ENCODE measurements at regions of chr10 and their contacts with region 1.

Region 1: GRCh38 chr10:127813290-127813689 is 76.3 kb downstream of the FOXI2 start:
- DNase-seq: no peak
- H3K4me3 ChIP-seq: no peak overlapping the region
- H3K27ac ChIP-seq: no peak overlapping the region
- H3K4me1 ChIP-seq: no peaks in the 10 kb centered on the region
- H3K27me3 ChIP-seq: no peaks in the 10 kb centered on the region
- CTCF ChIP-seq: peak in 1 of 5 experiments; percentile 21
- EP300 ChIP-seq: no peak
- POLR2A ChIP-seq: no peak

Region 2: GRCh38 chr10:127720142-127720541 is 93.1 kb before region 1 on chr10:
- in situ Hi-C with region 1: no loop called
- intact Hi-C with region 1: no loop called
- DNase-seq: no peak
- H3K4me3 ChIP-seq: no peak overlapping the region
- H3K27ac ChIP-seq: no peak overlapping the region
- H3K4me1 ChIP-seq: no peaks in the 10 kb centered on the region
- H3K27me3 ChIP-seq: no peaks in the 10 kb centered on the region
- CTCF ChIP-seq: no peak
- EP300 ChIP-seq: no peak
- POLR2A ChIP-seq: no peak

Region 3: DNA sequence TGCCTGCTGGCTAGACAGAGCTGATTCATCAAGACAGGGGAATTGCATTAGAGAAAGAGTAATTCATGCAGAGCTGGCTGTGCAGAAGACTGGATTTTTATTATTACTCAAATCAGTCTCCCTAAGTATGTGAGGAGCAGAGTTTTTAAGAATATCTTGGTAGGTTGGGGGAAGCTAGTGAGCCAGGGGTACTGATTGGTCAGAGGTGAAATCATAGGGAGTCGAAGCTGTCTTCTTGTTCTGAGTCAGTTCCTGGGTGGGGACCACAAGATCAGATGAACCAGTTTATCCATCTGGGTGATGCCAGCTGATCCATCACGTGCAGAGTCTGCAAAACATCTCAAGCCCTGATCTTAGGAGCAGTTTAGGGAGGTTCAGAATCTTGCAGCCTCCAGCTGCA is 36.5 kb before region 1 on chr10:
- in situ Hi-C with region 1: no loop called
- intact Hi-C with region 1: loop called (anchors 2 kb)
- DNase-seq: no peak
- H3K4me3 ChIP-seq: no peak overlapping the region
- H3K27ac ChIP-seq: no peak overlapping the region
- H3K4me1 ChIP-seq: peaks cover 0 to 6% (median 0%) of the 10 kb centered on the region in 4 donors
- H3K27me3 ChIP-seq: no peaks in the 10 kb centered on the region
- CTCF ChIP-seq: no peak
- EP300 ChIP-seq: no peak
- POLR2A ChIP-seq: no peak